ENCODE measurements at regions of chr15 and their contacts with region 1.

Region 1: GRCh38 chr15:51688863-51689262 is 7.6 kb downstream of the SCG3 start:
- DNase-seq: peak; percentile 7
- ATAC-seq: no peak
- H3K4me3 ChIP-seq: no peak overlapping the region
- H3K27ac ChIP-seq: no peak overlapping the region
- H3K4me1 ChIP-seq: no peaks in the 10 kb centered on the region
- H3K27me3 ChIP-seq: peaks cover 16% of the 10 kb centered on the region
- CTCF ChIP-seq: peak; percentile 23
- POLR2A ChIP-seq: no peak
- RAD21 ChIP-seq: no peak; the same call in 1 of the 2 replicates

Region 2: DNA sequence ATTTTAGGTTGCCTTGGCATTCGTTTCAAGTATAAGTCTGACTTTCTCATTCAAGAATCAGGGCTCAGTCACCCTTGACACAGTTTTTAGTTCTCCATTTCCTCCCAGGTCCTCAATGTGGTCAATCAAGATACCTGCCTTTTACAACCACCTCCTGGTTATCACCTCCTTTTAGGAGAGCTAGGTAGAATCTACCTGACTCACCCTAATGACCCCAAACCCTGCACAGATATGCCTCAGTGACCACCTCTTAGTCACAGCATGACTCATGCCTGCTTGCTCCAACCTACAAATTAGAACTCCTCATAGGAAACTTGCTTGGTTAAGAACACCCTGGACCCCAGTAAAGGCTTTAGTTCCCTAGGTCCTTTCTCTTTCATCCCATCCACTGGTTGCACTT is 88.7 kb before region 1 on chr15:
- CTCF ChIA-PET with region 1: no interaction called
- POLR2A ChIA-PET with region 1: no interaction called
- dilution Hi-C with region 1: no loop called
- in situ Hi-C with region 1: no loop called
- intact Hi-C with region 1: no loop called
- DNase-seq: peak; percentile 43
- ATAC-seq: no peak
- H3K4me3 ChIP-seq: no peak overlapping the region
- H3K27ac ChIP-seq: no peak overlapping the region
- H3K4me1 ChIP-seq: peaks cover 6% of the 10 kb centered on the region
- H3K27me3 ChIP-seq: no peaks in the 10 kb centered on the region
- CTCF ChIP-seq: no peak
- POLR2A ChIP-seq: no peak
- RAD21 ChIP-seq: no peak

Region 3: GRCh38 chr15:51759557-51760070 is 70.8 kb after region 1 on chr15:
- CTCF ChIA-PET with region 1: no interaction called
- POLR2A ChIA-PET with region 1: no interaction called
- dilution Hi-C with region 1: no loop called
- in situ Hi-C with region 1: no loop called
- intact Hi-C with region 1: loop called (anchors 5 kb)
- DNase-seq: peak; percentile 97
- ATAC-seq: peak; percentile 93
- H3K4me3 ChIP-seq: no peak overlapping the region
- H3K27ac ChIP-seq: peak overlapping the region; percentile 34; the same call in 1 of the 2 replicates
- H3K4me1 ChIP-seq: peaks cover 9% of the 10 kb centered on the region
- H3K27me3 ChIP-seq: no peaks in the 10 kb centered on the region
- CTCF ChIP-seq: 0 out of 2 replicates have a peak, but pooled peaks have one; percentile 7
- POLR2A ChIP-seq: no peak
- RAD21 ChIP-seq: no peak

Region 4: GRCh38 chr15:53197426-53197839 is 1508.6 kb after region 1 on chr15:
- CTCF ChIA-PET with region 1: no interaction called
- POLR2A ChIA-PET with region 1: no interaction called
- dilution Hi-C with region 1: no loop called
- in situ Hi-C with region 1: no loop called
- intact Hi-C with region 1: no loop called
- DNase-seq: peak; percentile 2
- ATAC-seq: no peak
- H3K4me3 ChIP-seq: no peak overlapping the region
- H3K27ac ChIP-seq: no peak overlapping the region
- H3K4me1 ChIP-seq: no peaks in the 10 kb centered on the region
- H3K27me3 ChIP-seq: no peaks in the 10 kb centered on the region
- CTCF ChIP-seq: peak; percentile 60
- POLR2A ChIP-seq: no peak
- RAD21 ChIP-seq: peak; percentile 45